ENCODE measurements at regions of chr11 and their contacts with region 1.

Region 1: GRCh38 chr11:65652511-65653231 is 10.0 kb downstream of the RELA start:
- DNase-seq: peak; percentile 94 to 97
- ATAC-seq: peak; percentile 82 to 90 (median 88)
- H3K4me3 ChIP-seq: peak overlapping the region; percentile 71
- H3K27ac ChIP-seq: peak overlapping the region; percentile 93
- H3K4me1 ChIP-seq: peaks cover 17% of the 10 kb centered on the region
- H3K27me3 ChIP-seq: peaks cover 0 to 2% (median 0%) of the 10 kb centered on the region in 3 donors
- CTCF ChIP-seq: no peak

Region 2: DNA sequence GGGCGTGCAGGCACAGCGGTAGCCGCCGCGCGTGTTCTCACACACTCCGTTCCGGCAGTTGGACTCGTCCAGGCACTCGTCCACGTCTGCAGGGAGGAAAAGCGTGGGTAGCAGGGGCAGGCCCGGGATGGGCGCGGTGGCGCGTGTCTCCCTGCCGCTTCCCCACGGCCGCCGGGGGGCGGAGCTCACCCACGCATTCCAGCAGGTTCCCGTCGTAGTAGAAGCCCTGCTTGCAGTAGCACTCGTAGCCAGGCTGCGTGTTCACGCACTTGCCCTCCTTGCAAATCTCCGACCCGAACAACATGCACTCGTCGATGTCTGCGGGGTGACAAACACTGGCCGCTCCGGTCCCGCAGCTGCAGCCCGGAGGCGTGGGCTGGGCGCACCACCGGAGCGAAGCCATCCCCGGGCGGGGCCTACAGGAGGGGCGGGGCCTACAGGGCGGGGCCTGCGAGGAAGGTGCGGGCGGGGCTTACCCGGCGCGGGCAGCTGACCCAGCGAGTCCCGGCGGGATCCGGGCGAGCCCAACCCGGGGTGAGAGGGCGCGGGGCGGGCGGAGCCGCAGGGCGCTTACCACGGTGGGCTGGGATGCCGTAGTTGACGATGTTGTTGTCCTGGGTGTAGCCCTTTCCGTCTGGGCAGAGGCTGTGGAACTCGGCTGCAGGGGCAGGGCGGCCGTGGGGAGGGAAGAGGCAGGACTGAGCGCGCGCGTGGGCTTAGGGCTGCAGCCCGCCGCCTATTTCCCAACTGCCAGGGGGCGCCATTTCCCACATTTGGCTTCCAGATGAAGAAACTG is 112.2 kb before region 1 on chr11:
- intact Hi-C with region 1: loop called in 1 of 2 experiments (anchors 5 kb)
- DNase-seq: peak; percentile 89 to 95
- ATAC-seq: peak; percentile 85 to 95 (median 93)
- H3K4me3 ChIP-seq: peak overlapping the region; percentile 65
- H3K27ac ChIP-seq: peak overlapping the region; percentile 84
- H3K4me1 ChIP-seq: peaks cover 16% of the 10 kb centered on the region
- H3K27me3 ChIP-seq: no peaks in the 10 kb centered on the region
- CTCF ChIP-seq: peak; percentile 77

Region 3: DNA sequence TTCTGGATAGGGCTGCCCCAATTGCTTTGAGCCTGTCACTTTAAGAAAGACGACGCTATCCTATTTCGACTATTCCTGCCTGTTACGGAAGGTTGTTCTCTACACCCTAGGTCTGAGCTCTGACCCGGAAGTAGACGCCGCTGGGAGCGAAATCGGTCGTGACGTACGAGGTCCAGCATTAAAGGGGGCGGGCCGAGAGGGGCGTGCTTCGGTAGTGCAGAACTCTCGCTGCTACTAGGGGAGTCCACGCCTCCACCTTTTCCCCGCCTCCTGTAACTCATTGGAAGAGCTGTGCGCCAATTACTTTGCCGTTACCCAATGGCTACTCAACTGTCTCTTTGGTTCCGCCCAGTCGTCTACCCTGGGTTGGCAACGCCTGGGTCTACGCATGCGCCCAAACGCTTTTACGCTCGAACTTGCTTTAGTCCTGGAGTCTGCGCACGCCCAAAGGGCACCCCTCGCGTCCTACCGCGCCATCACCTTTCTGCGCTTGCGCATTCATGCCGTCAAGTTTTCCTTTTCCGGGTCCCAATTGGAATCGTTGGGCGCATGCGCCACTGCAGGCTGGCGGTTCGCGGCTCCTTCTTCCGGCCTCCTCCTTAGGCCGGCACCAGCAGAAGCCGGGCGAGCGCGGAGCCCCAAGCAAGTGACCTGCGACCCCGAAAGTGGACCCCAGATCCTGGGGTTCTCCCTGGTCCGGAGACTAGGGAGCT is 37.3 kb before region 1 on chr11 and contains the start of gene PCNX3:
- intact Hi-C with region 1: loop called in 1 of 2 experiments (anchors 2 kb)
- DNase-seq: peak; percentile 100
- ATAC-seq: peak; percentile 85 to 88 (median 85)
- H3K4me3 ChIP-seq: peak within 1 kb of the TSS; percentile 97
- H3K27ac ChIP-seq: peak within 1 kb of the TSS; percentile 89
- H3K4me1 ChIP-seq: peaks cover 35% of the 10 kb centered on the region
- H3K27me3 ChIP-seq: no peaks in the 10 kb centered on the region
- CTCF ChIP-seq: no peak
- total RNA-seq, gene PCNX3: 8.9 to 10.8 (median 9.7) TPM

Measured in psoas muscle (tissue), 8 donors.